WTC11 (cell line): ENCODE measurements at regions of chr1 and their contacts with region 1.

Region 1: GRCh38 chr1:43650310-43651085 is 549 bp downstream of the KDM4A start:
- DNase-seq: peak; percentile 97
- ATAC-seq: peak; percentile 73
- H3K4me3 Mint-ChIP-seq: peak overlapping the region; percentile 96
- H3K27ac Mint-ChIP-seq: peak overlapping the region; percentile 100
- H3K4me1 Mint-ChIP-seq: peaks cover 35% of the 10 kb centered on the region
- H3K27me3 Mint-ChIP-seq: peaks cover 5% of the 10 kb centered on the region
- CTCF ChIP-seq: no peak

Region 2: DNA sequence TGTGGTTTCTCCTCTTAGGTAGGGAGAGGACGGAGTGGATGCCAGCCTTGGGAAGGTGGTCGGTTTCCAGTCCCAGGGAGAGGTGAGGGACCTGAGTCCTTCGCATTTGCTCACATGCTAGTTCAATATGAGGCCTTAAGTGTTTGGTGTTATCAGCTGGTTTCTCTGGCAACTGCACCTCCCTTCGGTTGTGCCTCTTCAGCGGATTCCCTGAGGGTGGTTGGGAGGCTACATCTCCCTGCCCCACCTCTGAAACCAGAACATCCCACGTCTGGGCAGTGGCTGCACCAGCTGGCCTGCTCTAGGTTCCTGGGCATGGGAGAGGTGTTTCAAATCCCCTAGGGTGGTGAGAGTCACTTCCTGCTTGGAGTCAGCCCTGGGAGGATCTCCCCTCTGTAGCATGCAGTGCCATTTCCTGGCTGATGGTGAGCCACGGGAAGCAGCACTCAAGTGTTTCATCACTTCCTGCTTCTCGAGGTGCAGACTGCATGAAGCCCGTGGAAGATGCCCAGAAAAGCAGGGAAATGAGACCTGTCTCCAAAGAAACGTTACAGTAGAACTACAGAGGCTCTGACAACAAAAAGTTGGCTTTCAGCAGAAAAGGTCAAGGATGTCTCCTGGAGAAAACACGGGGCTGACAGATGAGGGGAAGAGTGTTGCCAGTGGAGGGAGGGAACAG is 376.2 kb before region 1 on chr1:
- CTCF ChIA-PET with region 1: no interaction called
- POLR2A ChIA-PET with region 1: no interaction called
- DNase-seq: no peak
- ATAC-seq: no peak
- H3K4me3 Mint-ChIP-seq: no peak overlapping the region
- H3K27ac Mint-ChIP-seq: no peak overlapping the region
- H3K4me1 Mint-ChIP-seq: peaks cover 28% of the 10 kb centered on the region
- H3K27me3 Mint-ChIP-seq: no peaks in the 10 kb centered on the region
- CTCF ChIP-seq: no peak

Region 3: GRCh38 chr1:43447891-43448708 is 202.4 kb before region 1 on chr1:
- CTCF ChIA-PET with region 1: no interaction called
- POLR2A ChIA-PET with region 1: no interaction called
- DNase-seq: no peak
- ATAC-seq: no peak
- H3K4me3 Mint-ChIP-seq: no peak overlapping the region
- H3K27ac Mint-ChIP-seq: no peak overlapping the region
- H3K4me1 Mint-ChIP-seq: peaks cover 12% of the 10 kb centered on the region
- H3K27me3 Mint-ChIP-seq: no peaks in the 10 kb centered on the region; the same call in 1 of the 2 replicates
- CTCF ChIP-seq: no peak

Region 4: GRCh38 chr1:43529206-43529731 is 121.2 kb before region 1 on chr1:
- CTCF ChIA-PET with region 1: interaction called, 11 read pairs
- POLR2A ChIA-PET with region 1: interaction called, 4 read pairs
- DNase-seq: peak; percentile 89
- ATAC-seq: peak; percentile 45
- H3K4me3 Mint-ChIP-seq: peak overlapping the region; percentile 91
- H3K27ac Mint-ChIP-seq: no peak overlapping the region
- H3K4me1 Mint-ChIP-seq: peaks cover 36% of the 10 kb centered on the region
- H3K27me3 Mint-ChIP-seq: peaks cover 10% of the 10 kb centered on the region
- CTCF ChIP-seq: peak; percentile 85

Region 5: DNA sequence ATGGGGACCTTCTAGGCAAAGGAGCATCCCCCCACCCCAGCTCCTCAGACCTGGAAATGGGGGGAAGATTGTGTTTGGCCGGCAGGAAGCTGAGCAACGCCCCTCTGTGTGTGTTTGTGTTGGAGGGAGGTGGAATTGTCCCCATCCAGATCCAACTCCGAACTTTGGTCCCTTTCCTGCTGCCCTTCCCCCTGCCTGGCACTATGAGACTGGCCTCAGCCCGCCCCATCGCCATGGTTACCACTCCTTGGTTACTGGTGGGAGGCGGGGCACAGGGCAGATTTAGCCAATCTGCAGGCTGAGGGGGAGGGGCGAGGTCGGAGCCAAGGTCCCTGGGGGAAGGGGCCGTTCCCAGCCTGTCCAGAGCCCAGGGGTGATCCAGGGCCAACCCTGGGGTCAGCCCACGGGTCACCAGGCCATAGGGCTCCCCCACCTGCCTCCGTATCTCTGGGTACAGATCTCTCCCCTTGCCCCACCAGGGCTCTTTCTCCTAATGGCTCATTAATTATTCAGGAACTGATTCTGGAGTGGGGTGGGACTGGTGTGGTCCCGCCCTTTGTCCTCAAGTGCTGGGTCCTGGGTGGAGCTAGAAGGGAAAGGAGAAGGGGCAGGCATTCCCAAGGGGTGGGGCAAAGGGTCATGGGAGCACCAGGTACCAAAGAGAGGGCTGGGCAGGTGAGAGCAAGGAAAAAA is 104.7 kb before region 1 on chr1:
- CTCF ChIA-PET with region 1: interaction called, 9 read pairs
- POLR2A ChIA-PET with region 1: interaction called, 12 read pairs
- DNase-seq: peak; percentile 98
- ATAC-seq: peak; percentile 71
- H3K4me3 Mint-ChIP-seq: peak overlapping the region; percentile 51
- H3K27ac Mint-ChIP-seq: peak overlapping the region; percentile 94
- H3K4me1 Mint-ChIP-seq: peaks cover 70% of the 10 kb centered on the region
- H3K27me3 Mint-ChIP-seq: no peaks in the 10 kb centered on the region
- CTCF ChIP-seq: no peak

Region 6: GRCh38 chr1:43639976-43640789 is 10.3 kb before region 1 on chr1:
- CTCF ChIA-PET with region 1: interaction called, 9 read pairs
- POLR2A ChIA-PET with region 1: interaction called, 14 read pairs
- DNase-seq: no peak
- ATAC-seq: peak; percentile 28; the same call in 1 of the 2 replicates
- H3K4me3 Mint-ChIP-seq: no peak overlapping the region
- H3K27ac Mint-ChIP-seq: no peak overlapping the region
- H3K4me1 Mint-ChIP-seq: no peaks in the 10 kb centered on the region
- H3K27me3 Mint-ChIP-seq: peaks cover 34% of the 10 kb centered on the region
- CTCF ChIP-seq: no peak